ENCODE measurements at regions of chr2 and their contacts with region 1.

Region 1: DNA sequence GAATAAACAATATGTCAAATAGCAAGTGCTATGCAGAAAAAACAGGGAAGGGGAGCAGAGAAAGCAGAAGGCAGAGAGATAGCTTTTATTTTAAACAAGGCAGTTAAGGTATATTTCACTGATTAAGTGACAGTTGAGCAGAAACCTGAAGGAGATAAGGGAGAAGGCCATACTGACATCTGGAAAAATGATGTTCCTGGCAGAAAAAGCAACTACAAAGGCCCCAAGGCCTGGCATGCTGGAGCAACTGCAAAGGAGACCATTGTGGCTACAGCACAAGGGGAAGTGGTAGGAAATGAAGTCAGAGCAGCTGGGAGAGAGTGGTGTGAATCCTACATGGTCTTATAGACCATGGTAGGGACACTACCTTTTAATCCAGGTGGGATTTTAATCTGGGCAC is 8.9 kb upstream of the PCBP1 start:
- DNase-seq: no peak
- H3K4me3 ChIP-seq: no peak overlapping the region
- H3K27ac ChIP-seq: no peak overlapping the region
- H3K4me1 ChIP-seq: no peaks in the 10 kb centered on the region
- H3K27me3 ChIP-seq: no peaks in the 10 kb centered on the region
- CTCF ChIP-seq: no peak

Region 2: GRCh38 chr2:70029814-70030409 is 48.5 kb before region 1 on chr2:
- CTCF ChIA-PET with region 1: no interaction called
- POLR2A ChIA-PET with region 1: interaction called, 13 read pairs
- intact Hi-C with region 1: no loop called
- DNase-seq: peak; percentile 95
- H3K4me3 ChIP-seq: no peak overlapping the region
- H3K27ac ChIP-seq: peak overlapping the region; percentile 89
- H3K4me1 ChIP-seq: peaks cover 28% of the 10 kb centered on the region
- H3K27me3 ChIP-seq: no peaks in the 10 kb centered on the region
- CTCF ChIP-seq: no peak